Activated B cell treated with CpG ODN at 0.5 μM for 24 hours (primary cell): ENCODE measurements at regions of chr2 and their contacts with region 1.

Region 1: DNA sequence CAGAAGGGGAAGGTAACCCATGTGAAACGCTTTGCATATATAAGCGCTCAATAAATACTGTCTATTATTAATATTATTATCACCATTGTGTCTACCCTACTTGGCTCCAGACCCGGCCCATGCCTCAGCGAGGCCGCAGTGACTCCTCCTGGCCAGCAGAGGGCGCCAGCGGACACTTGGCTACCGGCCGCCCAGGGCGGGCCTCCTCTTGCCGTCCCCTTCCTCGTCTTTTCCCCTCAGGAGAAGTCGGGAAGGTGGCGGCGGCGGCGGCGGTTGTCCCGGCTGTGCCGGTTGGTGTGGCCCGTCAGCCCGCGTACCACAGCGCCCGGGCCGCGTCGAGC is at the start of gene AGFG1:
- DNase-seq: peak; percentile 89
- ATAC-seq: peak; percentile 87
- H3K4me3 Mint-ChIP-seq: peak within 1 kb of the TSS; percentile 90
- H3K27ac Mint-ChIP-seq: peak within 1 kb of the TSS; percentile 78
- H3K4me1 Mint-ChIP-seq: peaks cover 36% of the 10 kb centered on the region
- H3K27me3 Mint-ChIP-seq: no peaks in the 10 kb centered on the region
- CTCF ChIP-seq: peak; percentile 77
- total RNA-seq, gene AGFG1: 108 and 125 TPM in 2 replicates

Region 2: GRCh38 chr2:227219312-227220105 is 252.4 kb before region 1 on chr2:
- CTCF ChIA-PET with region 1: no interaction called
- POLR2A ChIA-PET with region 1: no interaction called
- intact Hi-C with region 1: no loop called
- DNase-seq: no peak
- ATAC-seq: no peak
- H3K4me3 Mint-ChIP-seq: no peak overlapping the region
- H3K27ac Mint-ChIP-seq: no peak overlapping the region
- H3K4me1 Mint-ChIP-seq: no peaks in the 10 kb centered on the region
- H3K27me3 Mint-ChIP-seq: no peaks in the 10 kb centered on the region
- CTCF ChIP-seq: no peak

Region 3: GRCh38 chr2:227488045-227488444 is 16.2 kb after region 1 on chr2:
- CTCF ChIA-PET with region 1: no interaction called
- POLR2A ChIA-PET with region 1: no interaction called
- intact Hi-C with region 1: loop called (anchors 1 kb)
- DNase-seq: no peak
- ATAC-seq: no peak
- H3K4me3 Mint-ChIP-seq: no peak overlapping the region
- H3K27ac Mint-ChIP-seq: no peak overlapping the region
- H3K4me1 Mint-ChIP-seq: peaks cover 53% of the 10 kb centered on the region
- H3K27me3 Mint-ChIP-seq: no peaks in the 10 kb centered on the region
- CTCF ChIP-seq: no peak

Region 4: GRCh38 chr2:227509824-227510619 is 38.1 kb after region 1 on chr2:
- CTCF ChIA-PET with region 1: interaction called, 3 read pairs
- POLR2A ChIA-PET with region 1: no interaction called
- intact Hi-C with region 1: loop called (anchors 5 kb)
- DNase-seq: no peak
- ATAC-seq: no peak
- H3K4me3 Mint-ChIP-seq: no peak overlapping the region
- H3K27ac Mint-ChIP-seq: peak overlapping the region; percentile 46
- H3K4me1 Mint-ChIP-seq: peaks cover 85% of the 10 kb centered on the region
- H3K27me3 Mint-ChIP-seq: no peaks in the 10 kb centered on the region
- CTCF ChIP-seq: no peak

Region 5: DNA sequence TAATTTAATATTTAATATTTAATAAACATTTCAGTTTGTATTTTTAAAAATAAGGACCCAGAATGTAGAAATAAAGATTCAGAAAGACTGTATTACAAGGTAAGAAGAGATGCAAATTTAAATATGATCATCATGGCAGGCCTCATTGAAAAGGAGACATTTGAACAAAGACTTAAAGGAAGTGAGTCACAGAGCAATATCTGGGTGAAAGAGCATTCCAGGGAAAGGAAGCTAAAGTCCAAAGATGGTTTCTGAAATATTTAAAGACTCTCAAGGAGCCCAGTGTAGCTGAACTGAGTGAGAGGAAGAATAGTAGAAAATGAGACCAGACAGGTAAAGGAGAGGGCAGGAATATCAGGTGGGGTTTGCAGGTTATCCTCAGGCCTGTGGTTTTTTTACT is 151.3 kb after region 1 on chr2:
- CTCF ChIA-PET with region 1: no interaction called
- POLR2A ChIA-PET with region 1: no interaction called
- intact Hi-C with region 1: no loop called
- DNase-seq: no peak
- ATAC-seq: no peak
- H3K4me3 Mint-ChIP-seq: no peak overlapping the region
- H3K27ac Mint-ChIP-seq: no peak overlapping the region
- H3K4me1 Mint-ChIP-seq: no peaks in the 10 kb centered on the region
- H3K27me3 Mint-ChIP-seq: peaks cover 4% of the 10 kb centered on the region
- CTCF ChIP-seq: no peak